ENCODE measurements at regions of chr5 and their contacts with region 1.

Region 1: GRCh38 chr5:72307968-72308852 is 11.8 kb downstream of the MRPS27 start:
- DNase-seq: peak; percentile 96 to 98
- ATAC-seq: peak; percentile 99
- H3K4me3 ChIP-seq: peak overlapping the region; percentile 51
- H3K27ac ChIP-seq: peak overlapping the region; percentile 89 to 96
- H3K4me1 ChIP-seq: peaks cover 24% of the 10 kb centered on the region
- CTCF ChIP-seq: peak; percentile 87
- EP300 ChIP-seq: no peak
- POLR2A ChIP-seq: peak; percentile 98
- RAD21 ChIP-seq: peak; percentile 61 to 90

Region 2: GRCh38 chr5:72244862-72245371 is 63.3 kb before region 1 on chr5:
- CTCF ChIA-PET with region 1: interaction called, 6 read pairs
- POLR2A ChIA-PET with region 1: interaction called, 14 read pairs
- DNase-seq: peak; percentile 19 to 70
- ATAC-seq: peak; percentile 90 to 92
- H3K4me3 ChIP-seq: no peak overlapping the region
- H3K27ac ChIP-seq: 0 out of 6 replicates have a peak overlapping the region, but pooled peaks of 1 of the 2 experiments have one; percentile 12
- H3K4me1 ChIP-seq: peaks cover 52% of the 10 kb centered on the region
- CTCF ChIP-seq: peak; percentile 47; the same call in 2 of the 3 replicates
- EP300 ChIP-seq: no peak
- POLR2A ChIP-seq: no peak
- RAD21 ChIP-seq: peak; percentile 52 to 55

Region 3: DNA sequence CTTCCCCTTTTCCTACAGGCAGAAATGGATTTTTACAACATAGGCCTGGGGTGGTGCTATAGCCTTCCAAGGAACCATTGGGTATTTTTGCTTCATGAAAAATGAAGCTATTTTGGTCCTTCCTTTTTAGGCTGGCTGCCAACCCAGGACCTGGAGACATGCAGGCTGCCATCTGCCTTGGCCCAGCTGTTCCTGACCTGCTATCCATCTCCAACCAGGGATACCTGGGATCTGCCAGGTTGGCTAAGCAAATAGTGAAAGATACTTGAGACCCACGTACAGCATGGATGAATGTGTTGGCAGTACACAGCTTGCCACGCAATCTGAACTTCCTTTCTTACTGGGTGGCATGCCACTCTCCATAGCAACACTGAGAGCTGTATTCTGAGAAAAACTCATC is 19.3 kb before region 1 on chr5:
- CTCF ChIA-PET with region 1: interaction called, 14 read pairs
- POLR2A ChIA-PET with region 1: interaction called, 3 read pairs
- DNase-seq: no peak
- ATAC-seq: no peak
- H3K4me3 ChIP-seq: no peak overlapping the region
- H3K27ac ChIP-seq: no peak overlapping the region
- H3K4me1 ChIP-seq: peaks cover 11% of the 10 kb centered on the region
- CTCF ChIP-seq: no peak
- EP300 ChIP-seq: no peak
- POLR2A ChIP-seq: no peak
- RAD21 ChIP-seq: no peak

Region 4: GRCh38 chr5:72296256-72296655 is 12.0 kb before region 1 on chr5:
- CTCF ChIA-PET with region 1: interaction called, 18 read pairs
- POLR2A ChIA-PET with region 1: interaction called, 3 read pairs
- DNase-seq: no peak
- ATAC-seq: no peak
- H3K4me3 ChIP-seq: no peak overlapping the region
- H3K27ac ChIP-seq: no peak overlapping the region
- H3K4me1 ChIP-seq: peaks cover 17% of the 10 kb centered on the region
- CTCF ChIP-seq: no peak
- EP300 ChIP-seq: no peak
- POLR2A ChIP-seq: no peak
- RAD21 ChIP-seq: no peak

Region 5: DNA sequence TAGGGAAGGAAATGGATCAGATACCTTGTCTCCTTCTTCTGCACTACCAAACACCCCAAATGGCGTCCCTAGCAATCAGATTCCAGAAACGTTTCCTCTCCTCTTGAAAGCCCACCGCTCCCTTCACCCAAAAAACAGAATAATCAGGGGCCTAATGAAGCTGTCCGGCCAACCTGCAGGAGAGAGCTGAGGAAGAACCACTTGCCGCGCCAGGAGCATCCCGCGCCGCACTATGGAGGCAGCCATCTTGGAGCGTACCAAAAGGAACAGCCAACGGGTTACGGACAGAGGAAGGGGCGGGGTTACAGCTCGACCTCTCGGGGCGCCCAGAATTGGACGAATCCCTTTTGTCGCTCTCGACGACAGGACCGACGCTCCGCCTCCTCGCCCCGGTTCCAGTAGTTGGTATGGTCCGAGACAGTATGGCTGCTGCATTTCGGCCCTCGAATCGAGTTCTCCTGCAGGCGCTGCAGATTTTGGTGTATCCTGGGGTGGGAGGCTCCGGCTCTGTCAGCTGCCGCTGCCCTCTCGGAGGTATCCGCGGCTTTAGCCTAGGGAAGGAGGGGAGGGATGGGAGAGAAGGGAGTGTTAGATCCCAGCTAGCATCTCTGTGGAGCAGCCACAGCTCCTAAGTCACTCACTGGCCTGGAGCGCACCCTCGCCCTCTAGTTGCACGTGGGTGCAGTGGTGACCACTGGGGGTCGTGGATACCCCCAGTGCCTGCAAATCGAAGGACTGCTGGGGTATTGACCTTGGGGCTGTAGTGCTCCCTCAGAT is 12.0 kb after region 1 on chr5 and contains the starts of genes MRPS27 and PTCD2:
- CTCF ChIA-PET with region 1: interaction called, 58 read pairs
- POLR2A ChIA-PET with region 1: interaction called, 16 read pairs
- DNase-seq: peak; percentile 98 to 99
- ATAC-seq: peak; percentile 99
- H3K4me3 ChIP-seq: peak within 1 kb of the TSS; percentile 82
- H3K27ac ChIP-seq: peak within 1 kb of the TSS; percentile 89 to 94
- H3K4me1 ChIP-seq: peaks cover 37% of the 10 kb centered on the region
- CTCF ChIP-seq: peak; percentile 36; the same call in 1 of the 3 replicates
- EP300 ChIP-seq: no peak
- POLR2A ChIP-seq: peak; percentile 85
- RAD21 ChIP-seq: peak in 1 of 2 experiments; percentile 26; a peak in 1 of 5 replicates
- polyA plus RNA-seq, gene MRPS27: 141 and 160 TPM in 2 replicates
- polyA plus RNA-seq, gene PTCD2: 26.5 and 31.1 TPM in 2 replicates

Region 6: GRCh38 chr5:72552041-72552557 is 243.9 kb after region 1 on chr5:
- CTCF ChIA-PET with region 1: no interaction called
- POLR2A ChIA-PET with region 1: no interaction called
- DNase-seq: no peak
- ATAC-seq: no peak
- H3K4me3 ChIP-seq: no peak overlapping the region
- H3K27ac ChIP-seq: no peak overlapping the region
- H3K4me1 ChIP-seq: peaks cover 12% of the 10 kb centered on the region
- CTCF ChIP-seq: no peak
- EP300 ChIP-seq: no peak
- POLR2A ChIP-seq: no peak
- RAD21 ChIP-seq: no peak

Measured in A549 (cell line).